K562 (cell line): ENCODE measurements at regions of chr4 and their contacts with region 1.

Region 1: GRCh38 chr4:55435141-55435841 is 39.5 kb downstream of the TMEM165 start:
- DNase-seq: peak in 1 of 4 experiments; percentile 13
- ATAC-seq: peak; percentile 41
- H3K4me3 ChIP-seq: no peak overlapping the region
- H3K27ac ChIP-seq: no peak overlapping the region
- H3K4me1 ChIP-seq: peaks cover 9 to 10% of the 10 kb centered on the region in 2 experiments; a peak in 4 of 5 replicates
- H3K27me3 ChIP-seq: no peaks in the 10 kb centered on the region
- CTCF ChIP-seq: peak in 2 of 3 experiments; percentile 11 to 29; a peak in 1 of 6 replicates
- EP300 ChIP-seq: no peak
- POLR2A ChIP-seq: no peak
- RAD21 ChIP-seq: no peak

Region 2: GRCh38 chr4:55920571-55920970 is 485.3 kb after region 1 on chr4:
- CTCF ChIA-PET with region 1: no interaction called
- POLR2A ChIA-PET with region 1: no interaction called
- in situ Hi-C with region 1: no loop called
- intact Hi-C with region 1: loop called (anchors 1 kb)
- DNase-seq: no peak
- ATAC-seq: peak; percentile 29; the same call in 2 of the 3 replicates
- H3K4me3 ChIP-seq: no peak overlapping the region
- H3K27ac ChIP-seq: no peak overlapping the region
- H3K4me1 ChIP-seq: no peaks in the 10 kb centered on the region
- H3K27me3 ChIP-seq: no peaks in the 10 kb centered on the region
- CTCF ChIP-seq: no peak
- EP300 ChIP-seq: no peak
- POLR2A ChIP-seq: no peak
- RAD21 ChIP-seq: no peak